Heart right ventricle (tissue), 16 donors: ENCODE measurements at regions of chr3 and their contacts with region 1.

Region 1: GRCh38 chr3:71210257-71211007 is 373.1 kb downstream of the FOXP1 start:
- DNase-seq: no peak
- ATAC-seq: peak in 7 of 8 donors; percentile 27 to 92 (median 64)
- H3K4me3 ChIP-seq: no peak overlapping the region
- H3K27ac ChIP-seq: peak overlapping the region in 7 of 10 donors; percentile 7 to 61 (median 39)
- H3K4me1 ChIP-seq: peaks cover 0 to 46% (median 32%) of the 10 kb centered on the region in 9 donors
- H3K27me3 ChIP-seq: no peaks in the 10 kb centered on the region
- CTCF ChIP-seq: peak in 2 of 9 donors; percentile 7 to 15

Region 2: DNA sequence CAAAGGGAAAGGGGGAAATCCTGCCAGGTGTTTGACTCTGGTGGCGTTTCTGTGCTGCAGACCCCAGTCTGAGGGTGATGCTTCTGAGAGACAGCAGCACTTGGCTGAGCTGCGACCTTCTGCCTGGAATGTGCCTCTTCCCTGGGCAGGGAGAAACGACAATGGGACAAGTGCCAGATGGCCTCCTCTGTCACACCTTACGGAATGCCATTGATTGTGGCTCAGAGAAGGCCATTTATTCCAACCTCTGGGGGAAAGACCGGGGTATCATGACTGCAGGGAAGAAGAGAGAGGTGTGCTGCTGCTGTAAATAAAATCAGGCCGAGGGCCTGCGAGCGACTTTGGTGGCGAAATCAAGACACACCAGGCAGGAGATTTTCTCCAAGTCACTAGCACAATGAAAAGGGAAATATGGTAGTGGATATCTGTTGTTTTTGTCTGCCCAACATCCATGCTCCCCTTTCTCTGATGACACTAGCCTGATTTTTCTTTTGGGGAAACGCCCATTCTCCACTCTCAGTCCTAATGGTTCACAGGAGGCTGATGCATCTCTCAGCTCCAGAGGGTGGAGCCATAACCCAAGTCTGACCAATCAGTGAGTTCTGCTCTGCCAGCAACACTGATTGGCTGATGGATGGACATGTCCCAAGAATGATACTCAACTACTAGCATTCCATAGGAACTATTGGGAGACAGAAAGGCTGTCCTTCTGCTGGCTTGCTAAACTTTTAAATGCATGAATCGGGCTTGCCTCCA is 37.0 kb after region 1 on chr3:
- intact Hi-C with region 1: loop called in 1 of 10 experiments (anchors 5 kb)
- DNase-seq: peak in 1 of 2 donors; percentile 24
- ATAC-seq: peak in 6 of 8 donors; percentile 24 to 66 (median 46)
- H3K4me3 ChIP-seq: no peak overlapping the region
- H3K27ac ChIP-seq: peak overlapping the region in 4 of 10 donors; percentile 40 to 82 (median 67)
- H3K4me1 ChIP-seq: peaks cover 8 to 76% (median 48%) of the 10 kb centered on the region in 9 donors
- H3K27me3 ChIP-seq: no peaks in the 10 kb centered on the region
- CTCF ChIP-seq: peak in 2 of 9 donors; percentile 14 to 15

Region 3: GRCh38 chr3:71258116-71258515 is 47.7 kb after region 1 on chr3:
- intact Hi-C with region 1: no loop called
- DNase-seq: no peak
- ATAC-seq: peak in 1 of 8 donors; percentile 15
- H3K4me3 ChIP-seq: no peak overlapping the region
- H3K27ac ChIP-seq: peak overlapping the region in 2 of 10 donors; percentile 24 to 60
- H3K4me1 ChIP-seq: peaks cover 0 to 30% (median 11%) of the 10 kb centered on the region in 9 donors
- H3K27me3 ChIP-seq: no peaks in the 10 kb centered on the region
- CTCF ChIP-seq: no peak

Region 4: DNA sequence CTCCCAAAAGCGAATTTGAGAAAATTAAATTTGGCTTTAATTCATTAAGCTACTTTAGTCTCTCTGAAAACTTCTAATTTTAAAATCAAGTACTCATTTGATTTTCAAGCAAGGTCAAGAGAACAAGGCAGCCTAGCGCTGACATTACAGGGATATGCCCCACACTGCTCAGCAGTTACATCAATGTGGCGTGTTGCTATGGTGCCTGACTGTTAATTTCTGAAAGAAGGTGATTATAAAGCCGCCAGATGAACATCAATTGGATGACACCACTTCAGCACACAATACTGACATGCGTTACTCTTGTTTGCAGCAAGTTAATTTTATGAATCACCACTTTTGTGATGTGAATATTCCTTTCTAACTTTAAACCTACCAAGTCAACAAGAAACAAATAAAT is 88.7 kb after region 1 on chr3:
- intact Hi-C with region 1: loop called in 1 of 10 experiments (anchors 10 kb)
- DNase-seq: no peak
- ATAC-seq: no peak
- H3K4me3 ChIP-seq: no peak overlapping the region
- H3K27ac ChIP-seq: no peak overlapping the region
- H3K4me1 ChIP-seq: peaks cover 0 to 18% (median 11%) of the 10 kb centered on the region in 9 donors
- H3K27me3 ChIP-seq: no peaks in the 10 kb centered on the region
- CTCF ChIP-seq: no peak